Activated B cell treated with CpG ODN at 0.5 μM for 24 hours (primary cell): ENCODE measurements at regions of chr4 and their contacts with region 1.

Region 1: DNA sequence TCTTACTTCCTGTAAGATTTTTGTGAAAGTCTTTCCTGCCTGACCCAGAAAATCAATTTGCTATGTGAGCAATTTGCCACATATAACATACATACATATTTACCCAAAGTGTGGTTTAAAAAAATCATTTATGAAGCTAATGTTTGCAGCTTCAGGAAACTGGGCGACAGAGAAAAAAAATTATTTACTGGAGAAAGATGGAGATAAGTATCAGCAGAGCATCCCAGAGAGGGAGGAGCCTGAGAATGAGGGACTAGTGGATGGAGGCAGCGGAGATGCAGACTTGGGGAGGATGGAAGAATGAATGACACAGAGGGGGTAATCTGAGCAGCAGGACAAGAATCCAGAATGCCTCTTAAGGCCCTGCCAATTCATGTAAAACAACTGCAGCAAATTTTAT is 975 bp upstream of the GYPA start:
- DNase-seq: no peak
- ATAC-seq: no peak
- H3K4me3 Mint-ChIP-seq: no peak overlapping the region
- H3K27ac Mint-ChIP-seq: no peak overlapping the region
- H3K4me1 Mint-ChIP-seq: no peaks in the 10 kb centered on the region
- H3K27me3 Mint-ChIP-seq: peaks cover 7% of the 10 kb centered on the region
- CTCF ChIP-seq: no peak

Region 2: GRCh38 chr4:143558823-143559756 is 582.4 kb before region 1 on chr4:
- CTCF ChIA-PET with region 1: no interaction called
- POLR2A ChIA-PET with region 1: no interaction called
- intact Hi-C with region 1: loop called (anchors 1 kb)
- DNase-seq: peak; percentile 52
- ATAC-seq: peak; percentile 88
- H3K4me3 Mint-ChIP-seq: peak overlapping the region; percentile 94
- H3K27ac Mint-ChIP-seq: peak overlapping the region; percentile 92
- H3K4me1 Mint-ChIP-seq: peaks cover 28% of the 10 kb centered on the region
- H3K27me3 Mint-ChIP-seq: no peaks in the 10 kb centered on the region
- CTCF ChIP-seq: no peak